ENCODE measurements at regions of chr2 and their contacts with region 1.

Region 1: DNA sequence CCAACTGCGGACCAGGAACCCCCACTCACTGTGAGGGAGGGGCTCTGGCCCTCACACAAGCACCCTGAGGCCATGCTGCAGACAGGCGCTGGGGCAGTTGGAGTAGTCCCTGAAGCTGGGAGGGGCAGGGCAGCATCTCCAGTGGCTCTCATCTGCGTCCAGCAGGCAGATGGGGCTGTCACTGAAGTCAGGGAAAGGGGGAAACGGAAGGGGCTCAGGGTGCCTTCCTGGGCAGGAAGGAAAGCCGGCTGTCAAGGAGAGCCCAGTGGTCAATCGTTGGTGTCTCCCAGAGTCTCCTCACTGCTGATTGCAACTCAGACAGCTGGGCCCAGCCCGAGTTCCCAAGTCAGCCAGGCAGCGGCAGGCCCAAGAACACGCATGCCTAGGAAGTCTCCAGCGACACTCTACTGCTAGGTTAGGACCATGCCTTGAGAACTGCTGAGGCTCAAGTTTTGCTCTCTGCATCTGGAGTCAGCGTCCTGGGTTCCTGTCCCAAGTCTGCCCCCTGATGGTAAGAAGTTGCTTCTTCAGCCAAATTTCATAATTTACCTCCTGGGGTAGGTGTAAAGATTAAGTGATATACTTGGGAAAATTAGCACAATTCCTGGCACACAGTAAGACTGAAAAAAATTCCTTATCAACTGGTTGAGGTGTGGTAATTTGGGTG is 27.5 kb upstream of the NMUR1 start:
- DNase-seq: peak; percentile 61
- H3K4me3 Mint-ChIP-seq: no peak overlapping the region
- H3K27ac Mint-ChIP-seq: no peak overlapping the region
- H3K4me1 Mint-ChIP-seq: peaks cover 31% of the 10 kb centered on the region
- H3K27me3 Mint-ChIP-seq: no peaks in the 10 kb centered on the region

Region 2: GRCh38 chr2:231482806-231483391 is 74.8 kb before region 1 on chr2:
- intact Hi-C with region 1: loop called (anchors 5 kb)
- DNase-seq: peak; percentile 67
- H3K4me3 Mint-ChIP-seq: peak overlapping the region; percentile 75
- H3K27ac Mint-ChIP-seq: peak overlapping the region; percentile 75
- H3K4me1 Mint-ChIP-seq: peaks cover 6% of the 10 kb centered on the region
- H3K27me3 Mint-ChIP-seq: no peaks in the 10 kb centered on the region

Region 3: DNA sequence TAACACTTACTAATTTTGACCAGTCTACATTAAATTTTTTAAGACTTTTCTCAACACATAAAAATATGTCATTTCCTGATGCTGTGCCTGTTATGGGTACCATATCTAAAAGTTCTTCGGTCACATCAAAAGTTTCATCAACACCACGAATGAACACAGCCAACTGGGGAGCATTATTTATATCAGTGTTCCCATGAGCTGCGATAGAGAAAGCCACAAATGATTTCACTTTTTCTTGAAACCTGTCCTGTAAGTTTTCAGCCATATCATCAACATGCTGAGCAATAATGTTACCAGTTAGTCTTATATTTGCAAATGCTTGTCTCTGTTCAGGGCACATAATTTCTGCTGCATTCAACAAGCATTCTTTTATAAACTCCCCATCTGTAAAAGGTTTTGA is 63.0 kb before region 1 on chr2:
- intact Hi-C with region 1: no loop called
- DNase-seq: no peak
- H3K4me3 Mint-ChIP-seq: no peak overlapping the region
- H3K27ac Mint-ChIP-seq: no peak overlapping the region
- H3K4me1 Mint-ChIP-seq: peaks cover 9% of the 10 kb centered on the region
- H3K27me3 Mint-ChIP-seq: peaks cover 6% of the 10 kb centered on the region

Region 4: GRCh38 chr2:231530091-231531011 is 27.4 kb before region 1 on chr2 and contains the start of gene NMUR1:
- intact Hi-C with region 1: loop called (anchors 1 kb)
- DNase-seq: peak; percentile 71
- H3K4me3 Mint-ChIP-seq: peak within 1 kb of the TSS; percentile 66
- H3K27ac Mint-ChIP-seq: no peak within 1 kb of the TSS
- H3K4me1 Mint-ChIP-seq: peaks cover 33% of the 10 kb centered on the region
- H3K27me3 Mint-ChIP-seq: peaks cover 9% of the 10 kb centered on the region
- total RNA-seq, gene NMUR1: 0.16 and 0.28 TPM in 2 replicates

Region 5: DNA sequence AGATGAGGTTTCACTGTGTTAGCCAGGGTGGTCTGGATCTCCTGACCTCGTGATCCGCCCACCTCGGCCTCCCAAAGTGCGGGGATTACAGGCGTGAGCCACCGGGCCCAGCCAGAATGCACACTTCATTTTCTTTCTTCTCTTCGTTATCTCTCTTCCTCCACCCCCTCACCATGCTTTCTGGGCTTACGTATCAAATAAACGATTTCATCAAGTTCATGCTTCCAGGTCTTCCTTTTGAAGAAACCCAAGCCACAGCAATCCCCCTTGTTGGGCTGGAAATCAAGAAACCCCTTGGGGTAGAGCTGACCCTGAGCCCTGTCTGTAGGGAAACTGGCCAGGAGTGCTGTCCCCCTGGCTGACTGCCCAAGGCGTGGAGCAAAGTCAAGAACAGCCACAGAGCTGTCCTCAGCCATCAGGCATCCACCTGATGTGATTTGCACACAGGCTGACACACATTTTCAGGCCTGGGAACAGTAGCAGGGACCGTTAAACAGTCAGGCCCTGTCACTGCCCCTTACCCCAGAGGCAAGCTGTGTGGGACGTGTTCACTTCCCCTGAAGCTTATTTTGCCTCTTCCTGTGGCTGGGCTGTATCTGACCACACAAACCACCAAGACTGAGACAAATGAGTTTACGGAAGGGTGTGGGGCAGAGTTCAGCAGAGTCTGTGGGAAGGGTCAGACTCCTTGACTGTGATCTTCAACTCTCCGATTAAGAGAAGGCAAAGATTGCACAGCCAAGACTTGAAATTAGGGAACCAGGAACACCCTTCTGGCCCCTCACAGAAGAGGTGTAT is 12.4 kb before region 1 on chr2:
- intact Hi-C with region 1: loop called (anchors 1 kb)
- DNase-seq: peak; percentile 78
- H3K4me3 Mint-ChIP-seq: peak overlapping the region; percentile 78
- H3K27ac Mint-ChIP-seq: peak overlapping the region; percentile 99
- H3K4me1 Mint-ChIP-seq: peaks cover 40% of the 10 kb centered on the region
- H3K27me3 Mint-ChIP-seq: peaks cover 8% of the 10 kb centered on the region

Region 6: GRCh38 chr2:231604685-231605606 is 47.2 kb after region 1 on chr2:
- intact Hi-C with region 1: loop called (anchors 1 kb)
- DNase-seq: peak; percentile 93
- H3K4me3 Mint-ChIP-seq: peak overlapping the region; percentile 62
- H3K27ac Mint-ChIP-seq: peak overlapping the region; percentile 66
- H3K4me1 Mint-ChIP-seq: peaks cover 3% of the 10 kb centered on the region
- H3K27me3 Mint-ChIP-seq: peaks cover 3% of the 10 kb centered on the region

Region 7: GRCh38 chr2:231677632-231678104 is 120.0 kb after region 1 on chr2:
- intact Hi-C with region 1: no loop called
- DNase-seq: peak; percentile 77
- H3K4me3 Mint-ChIP-seq: no peak overlapping the region
- H3K27ac Mint-ChIP-seq: no peak overlapping the region
- H3K4me1 Mint-ChIP-seq: peaks cover 13% of the 10 kb centered on the region
- H3K27me3 Mint-ChIP-seq: peaks cover 7% of the 10 kb centered on the region

Measured in activated T-helper 2 cell treated with anti-CD3 and anti-CD28 coated beads, Interferon-gamma antibody, Interleukin-2, Interleukin-4, amounts not matched to agents 10 μg/mL and 5 μg/mL and 100 μg/mL, durations not matched to agents 14 hours and 24 hours and 36 hours (primary cell).